ENCODE measurements at regions of chr1 and their contacts with region 1.

Region 1: GRCh38 chr1:36385410-36386257 is at the start of gene STK40:
- DNase-seq: peak; percentile 97
- ATAC-seq: peak; percentile 91
- total RNA-seq, gene STK40: 77.9 TPM

Region 2: DNA sequence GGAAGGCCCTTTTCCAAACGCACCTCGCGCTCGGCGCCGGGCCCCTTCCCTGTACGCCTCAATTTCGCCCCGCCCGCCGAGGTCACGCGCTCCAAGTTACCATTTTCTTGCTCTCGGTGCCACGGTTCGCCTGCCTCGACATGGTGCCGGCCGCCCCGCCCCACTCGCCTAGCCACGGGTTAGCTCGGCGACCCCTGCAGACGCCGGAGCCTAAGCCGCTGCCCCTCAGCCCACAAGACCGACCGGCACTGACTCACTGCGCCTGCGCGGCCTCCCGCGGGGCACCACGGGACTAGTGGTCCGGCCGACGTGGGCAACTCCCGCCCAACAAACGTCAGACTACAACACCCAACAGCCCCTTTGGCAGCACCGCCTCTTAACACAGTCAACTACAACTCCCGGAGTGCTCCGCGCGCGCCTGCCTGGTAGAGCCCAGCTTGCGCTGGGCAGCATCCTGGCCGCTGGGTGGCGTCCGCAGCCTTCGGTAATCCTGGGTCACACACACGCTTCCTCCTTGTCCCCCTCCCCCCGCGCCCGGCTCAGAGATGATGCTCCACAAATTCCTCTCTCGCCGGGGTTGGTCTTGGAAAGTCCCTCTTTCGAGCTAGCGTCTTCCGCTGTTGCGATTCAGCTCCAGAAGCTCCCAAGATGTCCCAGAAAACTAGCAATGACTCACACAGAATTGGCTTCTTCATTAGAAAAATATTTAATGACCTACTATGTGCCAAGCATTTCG is 236.2 kb before region 1 on chr1 and contains the start of gene TRAPPC3:
- intact Hi-C with region 1: loop called (anchors 5 kb)
- DNase-seq: peak; percentile 100
- ATAC-seq: peak; percentile 94
- total RNA-seq, gene TRAPPC3: 53.9 TPM

Region 3: GRCh38 chr1:36223993-36224536 is 161.6 kb before region 1 on chr1 and contains the start of gene THRAP3:
- intact Hi-C with region 1: loop called (anchors 10 kb)
- DNase-seq: peak; percentile 100
- ATAC-seq: peak; percentile 97
- total RNA-seq, gene THRAP3: 60.1 TPM

Region 4: GRCh38 chr1:36397378-36398230 is 12.0 kb after region 1 on chr1 and contains the start of gene LSM10:
- intact Hi-C with region 1: loop called (anchors 1 kb)
- DNase-seq: peak; percentile 97
- ATAC-seq: peak; percentile 97
- total RNA-seq, gene LSM10: 59.3 TPM

Measured in Right ventricle myocardium inferior (tissue), 1 donor.